MCF 10A (cell line): ENCODE measurements at regions of chr16 and their contacts with region 1.

Region 1: DNA sequence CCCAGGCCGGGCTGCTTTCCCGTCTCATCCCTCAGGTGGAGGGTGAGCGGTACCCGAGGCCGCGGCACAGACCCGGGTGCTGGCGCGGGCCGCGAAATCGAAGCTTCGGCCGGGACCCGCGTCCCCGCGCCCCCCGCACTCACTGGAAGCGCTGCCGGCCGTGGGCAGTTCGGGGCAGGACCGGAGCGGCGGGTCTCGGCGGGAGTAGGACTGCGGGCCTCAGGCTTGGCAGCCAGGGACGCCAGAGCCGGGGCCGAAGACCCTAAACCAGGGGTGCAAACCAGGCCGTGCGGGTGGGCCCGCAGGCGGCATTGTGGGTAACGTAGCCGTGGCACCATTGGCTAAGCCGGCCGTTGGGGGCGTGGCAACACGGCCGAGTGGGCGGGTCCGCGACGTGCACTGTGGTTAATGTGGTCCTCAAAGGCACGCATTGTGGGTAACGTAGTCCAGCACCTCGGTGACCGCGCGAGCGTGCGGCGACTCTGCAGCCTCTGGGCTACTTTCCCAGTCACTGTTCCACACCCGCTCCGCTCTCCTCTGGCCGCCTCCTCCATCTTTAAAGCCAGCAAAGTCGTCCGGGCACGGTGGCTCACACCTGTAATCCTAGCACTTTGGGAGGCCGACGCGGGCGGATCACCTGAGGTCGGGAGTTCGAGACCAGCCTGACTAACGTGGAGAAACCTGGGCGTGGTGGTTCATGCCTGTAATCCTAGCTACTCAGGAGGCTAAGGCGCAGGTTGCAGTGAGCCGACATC is at the start of gene ZNF500:
- DNase-seq: peak; percentile 95
- H3K4me3 Mint-ChIP-seq: peak within 1 kb of the TSS; percentile 90
- H3K27ac Mint-ChIP-seq: peak within 1 kb of the TSS; percentile 95
- H3K4me1 Mint-ChIP-seq: peaks cover 5% of the 10 kb centered on the region
- H3K27me3 Mint-ChIP-seq: no peaks in the 10 kb centered on the region
- CTCF ChIP-seq: no peak
- total RNA-seq, gene ZNF500: 13.8 and 14.0 TPM in 2 replicates

Region 2: GRCh38 chr16:4734063-4734729 is 32.9 kb before region 1 on chr16 and contains the starts of genes ANKS3 and DNAAF8:
- CTCF ChIA-PET with region 1: interaction called, 4 read pairs
- POLR2A ChIA-PET with region 1: interaction called, 64 read pairs
- intact Hi-C with region 1: loop called (anchors 1 kb)
- DNase-seq: peak; percentile 98
- H3K4me3 Mint-ChIP-seq: peak within 1 kb of the TSS; percentile 98
- H3K27ac Mint-ChIP-seq: peak within 1 kb of the TSS; percentile 98
- H3K4me1 Mint-ChIP-seq: peaks cover 13% of the 10 kb centered on the region
- H3K27me3 Mint-ChIP-seq: no peaks in the 10 kb centered on the region
- CTCF ChIP-seq: no peak
- total RNA-seq, gene ANKS3: 29.9 and 35.0 TPM in 2 replicates
- total RNA-seq, gene DNAAF8: 0.56 and 1.6 TPM in 2 replicates

Region 3: GRCh38 chr16:4746991-4747574 is 20.0 kb before region 1 on chr16:
- CTCF ChIA-PET with region 1: interaction called, 4 read pairs
- POLR2A ChIA-PET with region 1: interaction called, 12 read pairs
- intact Hi-C with region 1: no loop called
- DNase-seq: no peak
- H3K4me3 Mint-ChIP-seq: no peak overlapping the region
- H3K27ac Mint-ChIP-seq: no peak overlapping the region
- H3K4me1 Mint-ChIP-seq: no peaks in the 10 kb centered on the region
- H3K27me3 Mint-ChIP-seq: no peaks in the 10 kb centered on the region
- CTCF ChIP-seq: no peak

Region 4: DNA sequence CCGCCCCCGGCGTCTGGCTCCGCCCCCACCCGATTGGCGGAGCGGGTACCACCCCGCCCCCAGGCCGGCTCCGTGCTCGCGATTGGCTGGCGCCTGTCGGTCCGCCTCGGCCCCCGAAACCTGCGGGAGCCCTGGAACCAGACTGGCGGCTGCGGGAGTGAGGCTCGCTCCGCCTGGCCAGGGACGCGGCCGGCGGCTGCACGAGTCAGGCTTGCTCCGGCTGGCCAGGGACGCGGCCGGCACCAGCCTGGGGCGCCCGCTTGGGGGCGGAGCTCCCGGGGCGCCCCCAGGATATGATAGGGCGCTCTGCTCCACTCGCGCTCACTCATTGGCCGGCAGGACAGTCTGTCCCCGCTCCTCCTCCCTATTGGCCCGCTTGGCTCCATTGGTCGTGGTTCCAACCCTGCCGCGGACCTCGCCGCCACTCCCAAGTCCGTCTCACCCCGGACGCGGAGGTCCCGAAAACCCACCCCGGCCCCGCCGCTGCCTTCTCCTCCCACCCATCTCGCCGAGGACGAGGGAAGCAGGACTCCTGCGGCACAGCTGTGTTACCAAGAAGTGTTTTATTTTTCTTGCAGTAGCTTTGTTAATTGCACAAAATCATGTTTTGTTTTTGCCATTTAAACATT is 35.7 kb after region 1 on chr16:
- CTCF ChIA-PET with region 1: no interaction called
- POLR2A ChIA-PET with region 1: interaction called, 40 read pairs
- intact Hi-C with region 1: loop called (anchors 2 kb)
- DNase-seq: peak; percentile 92
- H3K4me3 Mint-ChIP-seq: peak overlapping the region; percentile 76
- H3K27ac Mint-ChIP-seq: peak overlapping the region; percentile 27
- H3K4me1 Mint-ChIP-seq: peaks cover 6% of the 10 kb centered on the region
- H3K27me3 Mint-ChIP-seq: no peaks in the 10 kb centered on the region
- CTCF ChIP-seq: no peak